PC-9 (cell line): ENCODE measurements at regions of chr7 and their contacts with region 1.

Region 1: GRCh38 chr7:74379938-74380337 is 73.8 kb upstream of the GTF2IRD1 start:
- DNase-seq: no peak
- H3K4me3 ChIP-seq: no peak overlapping the region
- H3K27ac ChIP-seq: peak overlapping the region; percentile 7; the same call in 1 of the 2 replicates
- H3K4me1 ChIP-seq: peaks cover 9% of the 10 kb centered on the region
- H3K27me3 ChIP-seq: no peaks in the 10 kb centered on the region
- CTCF ChIP-seq: no peak

Region 2: DNA sequence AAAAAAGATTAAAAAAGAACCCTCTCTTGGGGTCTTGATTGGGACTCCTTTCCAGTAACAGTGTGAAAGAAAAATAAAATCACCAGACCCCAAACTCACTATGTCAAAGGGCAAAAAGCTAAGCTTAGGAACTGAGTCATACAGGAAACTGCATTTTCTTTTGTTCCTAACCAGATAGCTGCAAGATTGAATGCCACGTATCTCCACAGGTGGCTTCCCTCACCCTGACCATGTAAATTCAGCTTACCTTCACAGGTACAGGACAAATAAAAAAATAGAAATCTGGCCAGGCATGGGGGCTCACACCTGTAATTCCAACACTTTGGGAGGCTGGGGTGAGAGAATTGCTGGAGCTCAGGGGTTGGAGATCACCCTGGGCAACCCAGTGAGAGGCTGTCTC is 238.2 kb before region 1 on chr7:
- CTCF ChIA-PET with region 1: no interaction called
- POLR2A ChIA-PET with region 1: interaction called, 15 read pairs
- intact Hi-C with region 1: no loop called
- DNase-seq: peak; percentile 38 to 89
- H3K4me3 ChIP-seq: peak overlapping the region; percentile 20; the same call in 1 of the 2 replicates
- H3K27ac ChIP-seq: peak overlapping the region; percentile 100
- H3K4me1 ChIP-seq: peaks cover 30% of the 10 kb centered on the region
- H3K27me3 ChIP-seq: no peaks in the 10 kb centered on the region
- CTCF ChIP-seq: no peak

Region 3: DNA sequence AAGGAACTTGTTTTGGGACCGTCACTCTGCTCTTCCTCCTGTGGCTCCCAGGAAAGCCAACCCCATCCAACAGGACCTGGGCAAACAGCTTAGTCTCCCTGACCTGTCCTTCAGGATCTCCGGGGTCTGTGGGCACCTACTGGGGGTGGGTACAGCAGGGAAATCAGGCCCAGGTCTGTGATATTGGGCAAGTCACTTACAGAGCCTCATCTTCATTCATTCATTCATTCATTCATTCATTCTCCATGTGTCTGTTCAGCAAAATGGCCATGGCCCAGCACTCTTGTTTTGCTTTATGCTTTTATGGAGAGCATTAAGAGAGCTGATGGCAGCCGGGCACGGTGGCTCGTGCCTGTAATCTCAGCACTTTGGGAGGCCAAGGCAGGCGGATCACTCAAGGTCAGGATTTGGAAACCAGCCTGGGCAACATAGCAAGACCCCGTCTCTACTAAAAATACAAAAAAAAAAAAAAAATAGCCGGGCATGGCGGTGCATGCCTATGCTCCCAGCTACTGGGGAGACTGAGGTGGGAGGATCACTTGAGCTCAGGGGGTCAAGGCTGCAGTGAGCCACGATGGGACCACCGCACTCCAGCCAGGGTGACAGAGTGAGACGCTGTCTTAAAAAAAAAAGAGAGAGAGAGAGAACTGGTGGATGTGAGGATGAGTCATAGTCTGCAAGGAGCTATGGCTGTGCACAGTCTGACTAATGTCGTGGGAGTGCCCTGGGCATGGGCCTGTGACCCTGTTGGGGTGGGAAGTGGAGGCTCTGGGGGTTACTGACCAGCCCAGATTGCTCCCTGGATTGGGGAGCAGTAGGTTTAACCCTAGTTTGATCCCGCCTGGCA is 36.4 kb before region 1 on chr7:
- CTCF ChIA-PET with region 1: no interaction called
- POLR2A ChIA-PET with region 1: interaction called, 15 read pairs
- intact Hi-C with region 1: no loop called
- DNase-seq: peak; percentile 77 to 79
- H3K4me3 ChIP-seq: no peak overlapping the region
- H3K27ac ChIP-seq: peak overlapping the region; percentile 73
- H3K4me1 ChIP-seq: peaks cover 12% of the 10 kb centered on the region
- H3K27me3 ChIP-seq: no peaks in the 10 kb centered on the region
- CTCF ChIP-seq: no peak

Region 4: GRCh38 chr7:76149847-76150691 is 1770.1 kb after region 1 on chr7:
- CTCF ChIA-PET with region 1: no interaction called
- POLR2A ChIA-PET with region 1: no interaction called
- intact Hi-C with region 1: no loop called
- DNase-seq: no peak
- H3K4me3 ChIP-seq: no peak overlapping the region
- H3K27ac ChIP-seq: no peak overlapping the region
- H3K4me1 ChIP-seq: no peaks in the 10 kb centered on the region
- H3K27me3 ChIP-seq: no peaks in the 10 kb centered on the region
- CTCF ChIP-seq: no peak